ENCODE measurements at regions of chr2 and their contacts with region 1.

Region 1: GRCh38 chr2:156472686-156473085 is 36.5 kb downstream of the GPD2 start:
- DNase-seq: peak in 1 of 3 donors; percentile 43
- H3K4me3 ChIP-seq: no peak overlapping the region
- H3K4me3 Mint-ChIP-seq: no peak overlapping the region
- H3K27ac ChIP-seq: no peak overlapping the region
- H3K27ac Mint-ChIP-seq: peak overlapping the region in 3 of 7 donors; percentile 30 to 87 (median 78)
- H3K4me1 ChIP-seq: peaks cover 28 to 50% of the 10 kb centered on the region in 2 donors
- H3K4me1 Mint-ChIP-seq: peaks cover 87% of the 10 kb centered on the region
- H3K27me3 ChIP-seq: no peaks in the 10 kb centered on the region
- H3K27me3 Mint-ChIP-seq: no peaks in the 10 kb centered on the region
- CTCF ChIP-seq: no peak

Region 2: DNA sequence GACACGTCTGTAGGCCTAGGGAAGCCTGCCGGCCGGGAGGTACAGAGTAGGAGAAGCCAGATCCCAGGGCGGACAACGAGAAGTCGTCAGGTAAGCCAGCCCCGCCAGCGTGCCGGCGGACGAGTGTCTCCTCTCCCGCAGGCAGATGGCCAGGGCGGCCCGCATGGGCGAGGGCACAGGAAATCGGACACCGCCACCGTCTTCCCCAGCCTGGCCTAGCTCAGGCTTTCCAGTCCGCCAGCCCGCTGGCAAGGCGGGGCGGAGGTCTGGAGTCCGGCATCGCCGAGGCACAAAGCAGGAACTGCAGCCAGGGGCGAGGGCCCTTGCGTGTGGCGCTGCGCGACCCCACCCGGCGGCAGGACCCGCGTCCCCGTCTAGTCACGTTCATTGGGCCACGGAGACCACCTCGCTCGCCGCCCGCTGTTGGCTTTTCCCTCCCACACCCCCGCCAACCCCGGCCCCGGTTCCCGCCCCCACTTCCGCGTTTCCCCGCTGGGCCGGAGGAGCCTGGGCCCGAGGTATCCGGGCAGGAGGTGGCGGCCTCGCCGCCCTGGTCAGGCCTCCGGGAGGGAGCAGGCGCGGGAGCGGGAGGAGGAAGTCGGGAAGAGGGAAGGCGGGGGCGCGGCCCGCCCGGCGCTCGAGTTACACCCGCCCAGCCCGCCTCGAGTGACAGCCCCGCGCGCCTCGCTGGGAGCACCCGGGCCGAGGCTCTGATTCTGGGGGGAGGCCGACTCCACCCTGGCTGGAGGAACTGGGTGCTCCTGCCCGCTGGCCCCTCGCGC is 36.8 kb before region 1 on chr2 and contains the start of gene GPD2:
- intact Hi-C with region 1: loop called in 1 of 2 experiments (anchors 5 kb)
- DNase-seq: peak; percentile 79 to 82 (median 81)
- H3K4me3 ChIP-seq: peak within 1 kb of the TSS; percentile 50 to 91 (median 90)
- H3K4me3 Mint-ChIP-seq: peak within 1 kb of the TSS; percentile 94 to 95
- H3K27ac ChIP-seq: peak within 1 kb of the TSS; percentile 89 to 98
- H3K27ac Mint-ChIP-seq: peak within 1 kb of the TSS; percentile 95 to 99 (median 98)
- H3K4me1 ChIP-seq: peaks cover 37 to 57% of the 10 kb centered on the region in 2 donors
- H3K4me1 Mint-ChIP-seq: peaks cover 55% of the 10 kb centered on the region
- H3K27me3 ChIP-seq: no peaks in the 10 kb centered on the region
- H3K27me3 Mint-ChIP-seq: no peaks in the 10 kb centered on the region
- CTCF ChIP-seq: no peak
- polyA plus RNA-seq, gene GPD2: 13.4 to 17.1 (median 14.5) TPM

Region 3: GRCh38 chr2:157321466-157321865 is 848.8 kb after region 1 on chr2:
- intact Hi-C with region 1: no loop called
- DNase-seq: peak in 2 of 3 donors; percentile 27 to 51
- H3K4me3 ChIP-seq: no peak overlapping the region
- H3K4me3 Mint-ChIP-seq: no peak overlapping the region
- H3K27ac ChIP-seq: no peak overlapping the region
- H3K27ac Mint-ChIP-seq: no peak overlapping the region
- H3K4me1 ChIP-seq: peaks cover 8 to 9% of the 10 kb centered on the region in 2 donors
- H3K4me1 Mint-ChIP-seq: peaks cover 7% of the 10 kb centered on the region
- H3K27me3 ChIP-seq: no peaks in the 10 kb centered on the region
- H3K27me3 Mint-ChIP-seq: peaks cover 0 to 2% (median 0%) of the 10 kb centered on the region in 3 donors
- CTCF ChIP-seq: no peak